Activated T-helper 2 cell treated with anti-CD3 and anti-CD28 coated beads, Interferon-gamma antibody, Interleukin-2, Interleukin-4, amounts not matched to agents 10 μg/mL and 5 μg/mL and 100 μg/mL, durations not matched to agents 14 hours and 24 hours and 36 hours (primary cell): ENCODE measurements at regions of chr14 and their contacts with region 1.

Region 1: GRCh38 chr14:39174560-39175444 is at the start of gene PNN:
- DNase-seq: peak; percentile 97
- H3K4me3 Mint-ChIP-seq: peak within 1 kb of the TSS; percentile 95
- H3K27ac Mint-ChIP-seq: peak within 1 kb of the TSS; percentile 98
- H3K4me1 Mint-ChIP-seq: peaks cover 28% of the 10 kb centered on the region
- H3K27me3 Mint-ChIP-seq: no peaks in the 10 kb centered on the region
- total RNA-seq, gene PNN: 115 and 119 TPM in 2 replicates

Region 2: DNA sequence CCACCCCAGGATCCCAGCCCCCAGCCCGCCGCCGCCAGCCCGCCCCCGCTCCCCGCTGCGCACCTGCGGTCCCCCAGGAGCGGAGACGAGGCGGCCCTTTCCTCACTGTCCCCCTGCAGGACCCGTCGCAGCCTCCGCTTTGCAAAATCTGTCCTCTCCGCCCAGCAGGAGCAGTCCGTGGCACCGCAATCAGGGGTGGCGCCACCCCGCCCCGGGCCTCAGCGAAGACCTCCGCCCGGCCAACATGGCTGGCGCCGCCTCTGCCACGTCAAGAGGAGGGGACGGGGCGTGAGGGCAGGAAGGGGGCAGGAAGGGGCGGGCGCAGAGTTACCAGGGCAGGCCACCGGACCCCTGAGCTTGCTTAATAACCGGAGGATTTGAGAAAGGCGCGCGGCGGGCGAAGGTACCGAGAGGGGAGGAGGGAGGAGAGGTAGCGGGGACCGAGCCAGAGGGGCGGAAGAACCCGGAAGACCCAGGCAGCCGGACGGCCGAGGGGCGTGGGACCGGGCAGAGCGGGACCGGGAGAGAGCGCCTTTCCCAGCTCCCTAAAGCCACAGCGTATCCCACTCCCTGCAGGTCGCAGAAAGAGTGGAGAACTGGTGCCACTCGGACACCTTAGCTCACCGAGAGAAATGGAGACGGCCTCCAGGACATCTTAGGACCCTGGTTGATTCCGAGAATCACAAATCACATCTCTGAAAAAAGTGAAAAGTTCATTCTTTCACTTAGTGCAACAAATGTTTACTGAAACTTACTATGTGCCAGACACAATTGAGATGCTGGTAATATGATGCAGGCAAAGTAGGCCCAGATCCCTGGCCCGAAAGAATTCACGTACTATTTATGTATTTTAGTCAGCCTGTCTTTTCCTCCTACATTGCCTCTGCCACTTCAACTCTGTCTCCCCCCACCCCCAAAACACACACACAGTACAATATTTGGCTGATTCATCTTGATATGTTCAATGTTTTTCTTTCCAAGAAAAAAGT is 71.5 kb before region 1 on chr14 and contains the start of gene SEC23A:
- intact Hi-C with region 1: loop called (anchors 1 kb)
- DNase-seq: peak; percentile 82
- H3K4me3 Mint-ChIP-seq: peak within 1 kb of the TSS; percentile 98
- H3K27ac Mint-ChIP-seq: peak within 1 kb of the TSS; percentile 98
- H3K4me1 Mint-ChIP-seq: peaks cover 29% of the 10 kb centered on the region
- H3K27me3 Mint-ChIP-seq: no peaks in the 10 kb centered on the region
- total RNA-seq, gene SEC23A: 76.4 and 86.7 TPM in 2 replicates

Region 3: GRCh38 chr14:39114073-39114838 is 60.5 kb before region 1 on chr14 and contains the start of gene GEMIN2:
- intact Hi-C with region 1: loop called (anchors 1 kb)
- DNase-seq: peak; percentile 94
- H3K4me3 Mint-ChIP-seq: peak within 1 kb of the TSS; percentile 96
- H3K27ac Mint-ChIP-seq: peak within 1 kb of the TSS; percentile 96
- H3K4me1 Mint-ChIP-seq: peaks cover 18% of the 10 kb centered on the region
- H3K27me3 Mint-ChIP-seq: no peaks in the 10 kb centered on the region
- total RNA-seq, gene GEMIN2: 22.0 and 22.1 TPM in 2 replicates

Region 4: GRCh38 chr14:39266871-39267591 is 92.2 kb after region 1 on chr14:
- intact Hi-C with region 1: loop called (anchors 1 kb)
- DNase-seq: peak; percentile 73
- H3K4me3 Mint-ChIP-seq: peak overlapping the region; percentile 75
- H3K27ac Mint-ChIP-seq: peak overlapping the region; percentile 93
- H3K4me1 Mint-ChIP-seq: peaks cover 43% of the 10 kb centered on the region
- H3K27me3 Mint-ChIP-seq: no peaks in the 10 kb centered on the region

Region 5: GRCh38 chr14:39368261-39368959 is 193.6 kb after region 1 on chr14:
- intact Hi-C with region 1: loop called (anchors 5 kb)
- DNase-seq: no peak
- H3K4me3 Mint-ChIP-seq: no peak overlapping the region
- H3K27ac Mint-ChIP-seq: no peak overlapping the region
- H3K4me1 Mint-ChIP-seq: peaks cover 5% of the 10 kb centered on the region
- H3K27me3 Mint-ChIP-seq: no peaks in the 10 kb centered on the region

Region 6: DNA sequence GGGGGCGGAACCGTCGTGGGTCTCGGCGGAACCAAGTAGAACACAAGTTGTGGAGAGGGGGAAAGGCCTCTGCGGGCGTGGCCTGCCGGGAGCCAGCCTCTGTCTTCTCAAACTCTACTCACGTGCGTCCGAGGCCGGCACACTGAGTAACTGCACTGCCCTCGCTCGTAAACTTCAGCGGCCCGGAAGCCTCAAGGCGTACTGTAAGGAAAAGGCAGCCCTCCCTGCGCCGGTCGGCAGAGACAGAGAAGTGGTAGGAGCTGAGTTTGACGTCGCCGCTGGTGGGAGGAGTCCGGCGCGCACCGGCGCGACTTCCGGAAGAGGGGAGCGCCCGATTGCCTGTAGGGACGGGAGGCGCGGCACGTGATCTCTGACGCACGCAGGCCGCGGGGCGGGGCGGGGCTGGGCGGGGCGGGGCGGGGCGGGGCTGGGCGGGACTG is 257.4 kb after region 1 on chr14 and contains the start of gene FBXO33:
- intact Hi-C with region 1: loop called (anchors 1 kb)
- DNase-seq: peak; percentile 97
- H3K4me3 Mint-ChIP-seq: peak within 1 kb of the TSS; percentile 99
- H3K27ac Mint-ChIP-seq: peak within 1 kb of the TSS; percentile 100
- H3K4me1 Mint-ChIP-seq: peaks cover 35% of the 10 kb centered on the region
- H3K27me3 Mint-ChIP-seq: no peaks in the 10 kb centered on the region
- total RNA-seq, gene FBXO33: 15.7 and 16.2 TPM in 2 replicates

Region 7: GRCh38 chr14:39446131-39446744 is 271.4 kb after region 1 on chr14:
- intact Hi-C with region 1: loop called (anchors 5 kb)
- DNase-seq: no peak
- H3K4me3 Mint-ChIP-seq: no peak overlapping the region
- H3K27ac Mint-ChIP-seq: no peak overlapping the region
- H3K4me1 Mint-ChIP-seq: peaks cover 34% of the 10 kb centered on the region
- H3K27me3 Mint-ChIP-seq: no peaks in the 10 kb centered on the region